ENCODE measurements at regions of chr1 and their contacts with region 1.

Region 1: GRCh38 chr1:182789138-182790076 is at the start of gene NPL:
- DNase-seq: peak; percentile 88
- H3K4me3 ChIP-seq: peak within 1 kb of the TSS; percentile 53 to 76 (median 64)
- H3K27ac ChIP-seq: peak within 1 kb of the TSS; percentile 63 to 83 (median 76)
- H3K4me1 ChIP-seq: peaks cover 4 to 17% (median 14%) of the 10 kb centered on the region in 4 donors
- H3K27me3 ChIP-seq: no peaks in the 10 kb centered on the region
- CTCF ChIP-seq: no peak
- EP300 ChIP-seq: no peak
- POLR2A ChIP-seq: peak; percentile 80
- total RNA-seq, gene NPL: 9.6 to 94.5 (median 11.4) TPM in 3 of 4 donors, not detected in the other

Region 2: GRCh38 chr1:182446033-182446669 is 343.3 kb before region 1 on chr1:
- in situ Hi-C with region 1: loop called in 3 of 4 experiments (anchors 10 to 25 kb)
- intact Hi-C with region 1: no loop called
- DNase-seq: peak; percentile 16
- H3K4me3 ChIP-seq: no peak overlapping the region
- H3K27ac ChIP-seq: no peak overlapping the region
- H3K4me1 ChIP-seq: peaks cover 0 to 3% (median 1%) of the 10 kb centered on the region in 4 donors
- H3K27me3 ChIP-seq: no peaks in the 10 kb centered on the region
- CTCF ChIP-seq: peak; percentile 60 to 73 (median 64)
- EP300 ChIP-seq: no peak
- POLR2A ChIP-seq: no peak

Region 3: DNA sequence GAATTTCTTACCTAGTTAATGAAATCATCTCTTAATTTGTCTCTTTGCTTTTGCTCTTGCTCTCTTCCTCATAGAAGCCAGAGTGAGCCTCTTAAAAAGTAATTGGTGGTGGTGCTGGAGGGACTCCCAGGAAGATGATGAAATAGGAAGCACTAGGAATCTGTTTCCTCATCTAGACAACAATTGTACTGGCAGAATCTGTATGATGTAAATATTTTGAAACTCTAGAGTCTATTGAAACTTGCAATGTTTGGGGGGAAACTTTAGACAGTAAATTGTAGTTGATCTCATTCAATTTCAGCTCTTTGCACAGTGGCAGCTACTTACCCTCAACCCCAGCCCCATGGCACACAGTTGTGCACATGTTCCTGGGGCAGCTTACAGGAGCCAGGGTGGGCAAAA is 328.9 kb before region 1 on chr1:
- in situ Hi-C with region 1: loop called in 1 of 4 experiments (anchors 25 kb)
- intact Hi-C with region 1: no loop called
- DNase-seq: no peak
- H3K4me3 ChIP-seq: no peak overlapping the region
- H3K27ac ChIP-seq: no peak overlapping the region
- H3K4me1 ChIP-seq: no peaks in the 10 kb centered on the region
- H3K27me3 ChIP-seq: no peaks in the 10 kb centered on the region
- CTCF ChIP-seq: no peak
- EP300 ChIP-seq: no peak
- POLR2A ChIP-seq: no peak

Region 4: DNA sequence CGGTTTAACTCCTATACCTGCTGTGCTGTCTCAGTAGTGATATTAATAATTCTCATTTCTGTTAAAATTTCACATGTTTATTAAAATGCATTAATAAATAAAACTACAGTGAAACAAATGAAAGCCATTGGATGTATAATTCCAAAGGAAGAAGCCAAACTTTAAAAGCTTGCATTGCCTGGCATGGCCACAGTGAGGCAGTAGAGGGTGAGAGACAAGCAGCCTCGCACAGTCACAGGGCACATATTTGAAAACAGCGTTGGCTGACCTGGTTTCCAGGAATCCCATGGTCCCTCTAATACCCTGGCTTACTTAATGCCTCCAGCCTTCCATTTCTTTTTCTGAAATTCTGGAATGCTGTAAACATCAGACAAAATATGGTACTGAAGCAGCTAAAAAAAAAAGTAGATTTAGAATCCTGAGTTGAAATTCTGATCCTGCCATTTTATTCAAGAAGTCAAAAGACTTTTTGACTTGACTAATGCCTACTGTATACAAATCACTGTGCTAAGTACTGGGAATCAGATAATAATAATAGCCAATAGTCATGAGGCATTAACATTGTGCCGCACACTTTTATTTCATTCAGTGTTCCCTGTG is 193.7 kb before region 1 on chr1:
- in situ Hi-C with region 1: loop called (anchors 5 kb)
- intact Hi-C with region 1: no loop called
- DNase-seq: peak; percentile 79
- H3K4me3 ChIP-seq: no peak overlapping the region
- H3K27ac ChIP-seq: no peak overlapping the region
- H3K4me1 ChIP-seq: no peaks in the 10 kb centered on the region
- H3K27me3 ChIP-seq: no peaks in the 10 kb centered on the region
- CTCF ChIP-seq: peak; percentile 74 to 89 (median 83)
- EP300 ChIP-seq: no peak
- POLR2A ChIP-seq: no peak

Region 5: DNA sequence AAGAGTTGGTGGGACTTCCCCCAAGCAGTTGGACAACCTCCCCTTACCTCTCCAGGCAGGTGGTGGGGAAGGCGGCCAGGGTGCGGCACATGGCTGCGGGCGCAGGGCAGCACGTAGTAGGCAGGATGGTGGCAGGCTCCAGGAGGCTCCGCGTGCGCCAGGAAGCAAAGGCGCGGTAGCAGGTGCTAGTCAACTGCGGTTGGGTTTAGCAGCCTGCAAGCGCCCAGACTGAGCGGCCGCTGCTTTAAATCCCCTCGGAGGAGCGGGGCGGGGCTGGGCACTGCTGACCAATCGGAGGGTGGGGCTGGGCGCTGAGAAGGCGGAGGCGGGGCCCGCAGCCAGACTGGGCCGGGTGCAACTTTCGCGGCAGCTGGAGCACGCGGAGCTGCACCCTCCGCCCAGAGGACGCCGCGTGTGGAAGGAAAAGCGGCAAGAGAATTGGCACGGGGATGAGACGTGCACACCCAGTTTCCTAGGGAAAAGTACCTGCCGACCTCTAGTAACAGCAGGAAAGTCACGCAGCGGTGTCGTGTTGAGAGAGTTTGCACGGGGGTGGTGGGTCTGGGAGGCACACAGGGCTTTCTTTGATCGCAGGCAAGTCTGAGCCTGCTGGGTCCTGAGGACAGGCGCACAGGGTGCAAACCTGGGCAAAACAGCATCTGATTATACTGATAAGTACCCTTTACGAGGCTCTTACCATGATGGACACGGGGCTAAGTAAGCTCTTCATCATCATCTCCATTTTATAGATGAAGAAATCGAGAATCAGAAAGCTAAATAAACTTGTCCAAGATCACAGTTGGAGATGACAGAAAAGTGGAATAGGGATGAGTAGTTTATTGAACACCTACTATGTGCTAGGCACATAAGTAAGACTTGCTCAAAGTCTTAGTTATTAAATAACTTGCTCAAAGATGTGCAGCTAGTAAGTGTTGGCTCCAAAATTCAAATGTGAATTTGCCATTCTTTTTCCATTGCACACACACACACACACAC is 184.9 kb before region 1 on chr1 and contains the start of gene RGS16:
- in situ Hi-C with region 1: loop called (anchors 5 kb)
- intact Hi-C with region 1: no loop called
- DNase-seq: peak; percentile 96
- H3K4me3 ChIP-seq: peak within 1 kb of the TSS; percentile 25 to 53 (median 38)
- H3K27ac ChIP-seq: peak within 1 kb of the TSS; percentile 36 to 74 (median 48)
- H3K4me1 ChIP-seq: peaks cover 4 to 19% (median 11%) of the 10 kb centered on the region in 4 donors
- H3K27me3 ChIP-seq: no peaks in the 10 kb centered on the region
- CTCF ChIP-seq: no peak
- EP300 ChIP-seq: no peak
- POLR2A ChIP-seq: peak; percentile 59
- total RNA-seq, gene RGS16: 0.82 to 3.0 (median 1.7) TPM in 3 of 4 donors, not detected in the other

Region 6: DNA sequence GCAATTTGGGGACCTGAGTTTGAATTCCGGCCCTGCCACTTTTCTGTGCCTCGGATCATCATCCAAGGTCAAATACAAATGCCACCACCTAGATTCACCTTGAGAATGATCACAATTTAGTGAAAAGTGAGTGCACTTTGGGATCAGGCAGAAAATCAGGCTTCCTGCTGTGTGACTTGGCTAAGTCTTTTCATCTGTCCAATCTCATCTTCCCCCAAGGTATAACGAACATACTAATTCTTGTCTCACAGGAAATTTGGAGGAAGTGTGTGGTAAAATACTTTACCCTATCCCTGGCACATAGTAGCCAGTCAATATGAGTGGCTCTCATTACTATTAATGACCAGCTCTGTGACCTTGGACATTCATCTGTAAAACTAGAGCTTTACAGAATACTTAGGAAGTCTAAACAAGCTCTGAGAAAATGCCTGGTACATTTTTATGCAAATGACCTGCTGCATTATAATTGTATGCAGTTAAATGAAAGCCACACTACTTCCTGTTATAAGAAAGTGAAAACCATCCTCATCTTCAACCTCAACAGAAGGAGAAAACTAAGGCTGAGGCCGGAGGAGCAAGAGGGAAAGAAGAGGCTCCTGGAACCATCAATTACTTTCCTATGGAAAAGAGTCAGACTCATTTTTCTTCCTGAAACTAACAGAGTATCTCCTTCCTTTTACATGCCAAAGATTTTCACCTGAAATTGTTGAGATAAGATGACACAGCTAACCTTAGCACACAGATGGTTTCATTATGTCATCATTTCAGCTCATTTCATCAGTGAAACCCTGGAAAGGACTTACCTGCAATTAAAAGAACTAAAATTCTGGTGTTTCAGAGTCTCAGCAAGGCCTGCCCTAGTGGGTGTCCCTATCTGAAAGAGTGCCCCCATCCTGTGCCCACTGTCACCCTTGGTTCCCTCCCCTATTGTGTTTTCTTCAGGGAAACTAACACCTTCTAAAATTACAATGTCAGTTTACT is 72.4 kb before region 1 on chr1:
- in situ Hi-C with region 1: no loop called
- intact Hi-C with region 1: no loop called
- DNase-seq: no peak
- H3K4me3 ChIP-seq: no peak overlapping the region
- H3K27ac ChIP-seq: no peak overlapping the region
- H3K4me1 ChIP-seq: no peaks in the 10 kb centered on the region
- H3K27me3 ChIP-seq: no peaks in the 10 kb centered on the region
- CTCF ChIP-seq: no peak
- EP300 ChIP-seq: no peak
- POLR2A ChIP-seq: no peak

Region 7: DNA sequence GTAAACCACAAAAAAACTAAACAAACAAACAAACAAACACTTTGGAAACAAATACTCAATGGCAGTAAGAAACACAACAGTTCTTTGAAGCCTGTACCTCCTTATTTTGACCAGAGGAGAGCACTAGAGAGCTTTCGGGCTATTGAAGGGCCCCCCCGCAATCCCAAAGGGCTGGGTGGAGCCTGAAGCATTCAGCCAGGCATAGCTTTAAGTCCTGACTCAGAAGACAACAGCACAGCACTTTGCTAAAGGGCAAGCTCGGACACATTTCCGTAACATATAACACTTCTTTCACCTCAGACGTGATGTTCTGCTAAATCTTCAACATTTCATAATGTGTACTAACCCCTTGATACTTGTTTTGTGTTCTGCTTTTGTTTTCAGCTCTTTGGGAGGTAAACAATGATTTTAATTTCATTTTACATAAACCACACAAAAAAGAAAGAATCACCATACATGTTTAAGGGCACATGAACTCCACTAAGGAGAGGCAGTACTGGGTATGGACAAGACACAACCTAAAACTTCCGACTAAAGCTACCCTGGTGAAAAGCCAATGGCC is 173.2 kb after region 1 on chr1:
- in situ Hi-C with region 1: no loop called
- intact Hi-C with region 1: no loop called
- DNase-seq: peak; percentile 81
- H3K4me3 ChIP-seq: peak overlapping the region in 1 of 4 donors; percentile 9
- H3K27ac ChIP-seq: peak overlapping the region in 3 of 4 donors; percentile 34 to 71 (median 39)
- H3K4me1 ChIP-seq: peaks cover 0 to 7% (median 0%) of the 10 kb centered on the region in 4 donors
- H3K27me3 ChIP-seq: no peaks in the 10 kb centered on the region
- CTCF ChIP-seq: peak; percentile 86 to 90 (median 89)
- EP300 ChIP-seq: no peak
- POLR2A ChIP-seq: no peak

Region 8: GRCh38 chr1:183070923-183071618 is 281.7 kb after region 1 on chr1:
- in situ Hi-C with region 1: no loop called
- intact Hi-C with region 1: no loop called
- DNase-seq: no peak
- H3K4me3 ChIP-seq: no peak overlapping the region
- H3K27ac ChIP-seq: peak overlapping the region; percentile 6 to 32 (median 18)
- H3K4me1 ChIP-seq: peaks cover 4 to 65% (median 26%) of the 10 kb centered on the region in 4 donors
- H3K27me3 ChIP-seq: no peaks in the 10 kb centered on the region
- CTCF ChIP-seq: no peak
- EP300 ChIP-seq: no peak
- POLR2A ChIP-seq: no peak

Region 9: GRCh38 chr1:183081402-183082120 is 292.2 kb after region 1 on chr1:
- in situ Hi-C with region 1: no loop called
- intact Hi-C with region 1: no loop called
- DNase-seq: no peak
- H3K4me3 ChIP-seq: no peak overlapping the region
- H3K27ac ChIP-seq: no peak overlapping the region
- H3K4me1 ChIP-seq: peaks cover 0 to 35% (median 8%) of the 10 kb centered on the region in 4 donors
- H3K27me3 ChIP-seq: no peaks in the 10 kb centered on the region
- CTCF ChIP-seq: no peak
- EP300 ChIP-seq: no peak
- POLR2A ChIP-seq: no peak